Stomach (tissue), 19 donors: ENCODE measurements at regions of chr20 and their contacts with region 1.

Region 1: GRCh38 chr20:11686820-11687543 is 230.7 kb upstream of the BTBD3 start:
- DNase-seq: peak; percentile 64 to 73
- H3K4me3 ChIP-seq: peak overlapping the region; percentile 43 to 49 (median 46)
- H3K27ac ChIP-seq: peak overlapping the region; percentile 14 to 53 (median 49)
- H3K4me1 ChIP-seq: peaks cover 12 to 20% (median 17%) of the 10 kb centered on the region in 4 donors
- H3K27me3 ChIP-seq: peaks cover 0 to 4% (median 0%) of the 10 kb centered on the region in 3 donors
- CTCF ChIP-seq: no peak
- EP300 ChIP-seq: no peak
- POLR2A ChIP-seq: no peak

Region 2: DNA sequence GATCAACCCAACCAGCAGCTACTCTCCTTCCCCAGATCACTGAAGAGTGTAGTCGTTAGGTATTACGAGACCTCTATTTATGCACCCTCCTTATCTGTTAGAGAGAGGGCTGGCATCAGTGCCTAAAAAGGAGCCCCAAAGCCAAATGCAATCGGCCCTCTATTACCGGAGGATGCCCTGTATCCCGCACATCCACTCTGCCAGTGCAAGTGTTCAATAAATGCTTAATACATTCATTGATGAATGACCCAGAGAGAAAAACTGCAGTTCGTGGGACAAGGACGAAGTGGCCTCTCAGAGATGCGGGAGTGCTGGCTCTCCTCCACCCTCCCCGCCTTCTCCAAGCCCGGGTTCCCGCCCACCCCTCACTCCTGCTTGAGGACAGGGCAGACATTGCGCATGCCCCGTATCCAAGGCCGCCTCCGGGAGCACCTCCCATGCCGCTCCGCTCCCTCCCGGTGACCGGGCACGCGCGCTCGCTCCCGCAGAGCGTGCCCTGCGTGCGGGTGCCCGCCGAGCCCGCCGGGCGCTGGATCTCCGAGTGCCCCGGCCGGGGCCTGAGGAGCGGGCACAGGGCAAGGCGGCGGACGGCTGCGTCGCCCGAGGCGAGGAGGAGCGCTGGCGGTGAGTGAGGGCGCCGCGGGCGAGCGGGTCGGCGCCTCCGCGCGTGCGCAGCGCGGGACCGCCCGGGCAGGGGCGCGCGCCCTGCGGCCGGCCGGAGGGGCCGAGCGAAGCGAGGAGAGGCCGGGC is 203.5 kb after region 1 on chr20:
- intact Hi-C with region 1: no loop called
- DNase-seq: peak; percentile 91 to 97
- H3K4me3 ChIP-seq: peak overlapping the region; percentile 82 to 97 (median 89)
- H3K27ac ChIP-seq: peak overlapping the region; percentile 93 to 99 (median 96)
- H3K4me1 ChIP-seq: peaks cover 4 to 40% (median 26%) of the 10 kb centered on the region in 4 donors
- H3K27me3 ChIP-seq: no peaks in the 10 kb centered on the region
- CTCF ChIP-seq: no peak
- EP300 ChIP-seq: no peak
- POLR2A ChIP-seq: no peak

Region 3: DNA sequence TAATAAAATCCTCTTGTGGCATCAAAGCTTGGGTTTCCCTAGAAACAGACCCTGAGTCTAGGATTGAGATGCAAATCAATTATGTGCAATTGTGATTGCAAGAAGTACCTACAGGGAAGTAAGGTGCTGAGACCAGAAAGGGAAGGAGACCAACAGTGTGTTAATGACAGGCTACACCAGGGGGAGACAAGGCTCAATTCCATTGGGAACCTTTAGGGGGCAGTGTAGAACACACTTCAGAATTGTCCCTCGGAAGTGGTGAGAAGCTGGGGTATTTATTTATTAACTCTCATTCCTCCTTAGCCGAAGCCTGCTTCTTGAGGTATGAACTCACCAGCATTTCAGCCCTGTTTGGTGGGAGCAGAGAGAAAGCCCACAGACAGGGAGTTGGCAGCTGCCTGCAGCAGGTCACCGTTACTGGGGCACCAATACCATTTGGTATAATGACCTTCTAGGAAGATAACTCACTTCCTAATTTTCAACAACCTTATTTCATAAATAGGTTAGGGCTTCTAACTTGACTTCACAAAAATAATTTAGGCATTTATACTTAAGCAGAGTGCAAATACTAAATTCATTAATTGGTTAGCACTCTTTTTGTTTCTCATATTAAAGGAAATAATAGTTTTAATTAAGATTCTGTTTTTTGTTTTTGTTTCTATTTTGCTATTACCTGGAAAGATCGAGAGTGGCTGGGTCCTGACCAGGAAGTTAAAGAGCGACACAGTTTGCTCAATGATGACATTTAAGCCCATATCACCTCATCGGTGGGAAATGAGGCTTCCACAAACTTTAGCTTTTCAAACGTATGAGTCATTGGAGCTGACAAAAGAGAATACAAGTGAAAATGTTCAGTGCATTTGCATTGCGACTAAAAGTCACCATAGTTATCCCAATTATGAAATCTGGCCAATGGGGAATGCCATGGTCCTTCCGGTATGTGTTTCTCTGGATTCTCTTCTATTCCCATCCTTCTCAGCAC is 325.6 kb after region 1 on chr20:
- intact Hi-C with region 1: no loop called
- DNase-seq: peak; percentile 28 to 62
- H3K4me3 ChIP-seq: no peak overlapping the region
- H3K27ac ChIP-seq: no peak overlapping the region
- H3K4me1 ChIP-seq: no peaks in the 10 kb centered on the region
- H3K27me3 ChIP-seq: no peaks in the 10 kb centered on the region
- CTCF ChIP-seq: peak in 5 of 7 experiments; percentile 53 to 87 (median 79)
- EP300 ChIP-seq: no peak
- POLR2A ChIP-seq: no peak

Region 4: DNA sequence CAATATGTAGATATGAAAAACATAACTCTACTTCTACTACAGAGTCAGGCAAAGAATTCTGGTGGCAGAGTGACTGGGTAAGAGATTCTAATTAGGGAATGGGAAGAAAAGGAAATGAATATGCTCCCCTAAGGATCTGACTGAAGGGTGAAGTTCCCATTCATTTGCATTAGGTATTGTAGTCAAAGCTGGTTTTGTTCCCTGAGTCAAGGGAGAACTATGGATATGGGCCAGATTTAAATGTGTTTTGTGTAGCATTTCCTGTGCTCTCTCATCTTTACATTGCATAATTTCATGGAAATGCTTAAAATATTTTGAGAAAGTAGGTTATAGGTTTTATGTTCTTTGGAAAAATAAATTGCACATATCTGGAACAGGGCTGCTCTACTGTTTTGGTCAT is 530.4 kb after region 1 on chr20:
- intact Hi-C with region 1: loop called (anchors 10 kb)
- DNase-seq: no peak
- H3K4me3 ChIP-seq: no peak overlapping the region
- H3K27ac ChIP-seq: no peak overlapping the region
- H3K4me1 ChIP-seq: no peaks in the 10 kb centered on the region
- H3K27me3 ChIP-seq: no peaks in the 10 kb centered on the region
- CTCF ChIP-seq: no peak
- EP300 ChIP-seq: no peak
- POLR2A ChIP-seq: no peak